K562 (cell line): ENCODE measurements at regions of chr4 and their contacts with region 1.

Region 1: GRCh38 chr4:83074086-83074704 is 39.2 kb downstream of the COPS4 start:
- DNase-seq: peak; percentile 33 to 70 (median 42)
- ATAC-seq: peak; percentile 89
- H3K4me3 ChIP-seq: no peak overlapping the region
- H3K27ac ChIP-seq: no peak overlapping the region
- H3K4me1 ChIP-seq: no peaks in the 10 kb centered on the region
- H3K27me3 ChIP-seq: no peaks in the 10 kb centered on the region
- CTCF ChIP-seq: peak; percentile 53 to 69 (median 53); a peak in 5 of 6 replicates
- EP300 ChIP-seq: no peak
- POLR2A ChIP-seq: no peak
- RAD21 ChIP-seq: peak; percentile 37 to 62

Region 2: DNA sequence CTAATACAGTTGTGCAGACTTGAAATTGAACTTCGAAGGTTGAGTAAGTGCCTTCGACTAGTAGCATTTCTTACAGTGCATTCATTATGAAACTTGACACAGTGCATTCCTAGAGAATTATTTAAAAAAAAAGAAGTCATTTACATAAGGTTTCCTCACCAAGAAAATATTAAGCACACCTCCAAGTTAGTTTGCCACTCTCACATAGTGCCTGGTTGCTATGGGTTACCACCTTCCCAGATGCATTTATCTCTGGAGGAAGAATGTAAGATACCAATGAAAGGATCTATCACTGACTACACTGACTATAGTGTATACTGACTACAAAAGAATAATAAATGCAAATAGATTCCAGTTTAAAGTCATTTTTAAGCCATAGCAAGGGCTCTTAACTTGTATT is 1290.6 kb before region 1 on chr4:
- CTCF ChIA-PET with region 1: no interaction called
- POLR2A ChIA-PET with region 1: no interaction called
- in situ Hi-C with region 1: no loop called
- intact Hi-C with region 1: no loop called
- DNase-seq: no peak
- ATAC-seq: no peak
- H3K4me3 ChIP-seq: no peak overlapping the region
- H3K27ac ChIP-seq: no peak overlapping the region
- H3K4me1 ChIP-seq: peaks cover 12 to 25% of the 10 kb centered on the region in 2 experiments
- H3K27me3 ChIP-seq: no peaks in the 10 kb centered on the region
- CTCF ChIP-seq: no peak
- EP300 ChIP-seq: no peak
- POLR2A ChIP-seq: no peak
- RAD21 ChIP-seq: no peak

Region 3: DNA sequence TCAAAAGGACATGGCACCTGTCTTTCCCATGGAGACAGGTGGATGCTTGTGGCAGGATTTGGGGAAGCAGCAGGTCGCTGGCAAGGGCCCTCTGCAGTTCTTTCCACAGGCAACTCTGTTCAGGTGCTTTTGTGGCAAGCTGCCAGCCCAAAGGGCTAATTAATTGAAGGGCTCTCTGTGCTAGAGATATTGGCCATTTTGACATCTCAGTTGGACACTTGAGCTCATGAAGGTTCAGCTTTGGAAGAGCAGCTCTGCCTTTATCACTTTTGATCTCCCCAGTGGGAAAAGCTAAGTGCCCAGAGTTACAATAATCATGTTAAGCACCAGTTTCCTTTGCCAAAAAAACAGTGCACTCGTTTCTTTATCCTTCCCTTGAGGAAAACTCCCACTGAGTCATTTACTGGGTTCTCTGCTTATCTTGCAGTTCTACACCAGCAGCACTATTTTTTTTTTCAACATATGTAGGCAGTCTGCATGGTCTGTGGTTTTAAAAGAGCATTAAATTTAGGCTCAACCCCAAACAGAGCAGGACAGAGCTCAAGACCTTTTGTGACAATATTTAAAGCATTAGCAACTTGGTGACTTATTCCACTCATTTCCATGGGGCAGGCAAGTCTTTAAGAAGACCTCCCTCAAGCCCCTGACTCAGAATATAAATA is 1266.1 kb before region 1 on chr4:
- CTCF ChIA-PET with region 1: no interaction called
- POLR2A ChIA-PET with region 1: no interaction called
- in situ Hi-C with region 1: no loop called
- intact Hi-C with region 1: no loop called
- DNase-seq: peak in 2 of 4 experiments; percentile 65 to 78
- ATAC-seq: peak; percentile 80
- H3K4me3 ChIP-seq: no peak overlapping the region
- H3K27ac ChIP-seq: peak overlapping the region; percentile 29; the same call in 2 of the 3 replicates
- H3K4me1 ChIP-seq: peaks cover 21 to 41% of the 10 kb centered on the region in 2 experiments
- H3K27me3 ChIP-seq: no peaks in the 10 kb centered on the region
- CTCF ChIP-seq: no peak
- EP300 ChIP-seq: peak; percentile 81; the same call in 1 of the 2 replicates
- POLR2A ChIP-seq: no peak
- RAD21 ChIP-seq: no peak

Region 4: GRCh38 chr4:83252782-83253405 is 178.7 kb after region 1 on chr4:
- CTCF ChIA-PET with region 1: no interaction called
- POLR2A ChIA-PET with region 1: no interaction called
- in situ Hi-C with region 1: no loop called
- intact Hi-C with region 1: loop called (anchors 1 kb)
- DNase-seq: peak; percentile 66 to 80 (median 68)
- ATAC-seq: peak; percentile 94
- H3K4me3 ChIP-seq: no peak overlapping the region
- H3K27ac ChIP-seq: no peak overlapping the region
- H3K4me1 ChIP-seq: no peaks in the 10 kb centered on the region; a peak in 2 of 5 replicates
- H3K27me3 ChIP-seq: no peaks in the 10 kb centered on the region
- CTCF ChIP-seq: peak; percentile 81 to 91 (median 84)
- EP300 ChIP-seq: peak; percentile 9; the same call in 1 of the 2 replicates
- POLR2A ChIP-seq: no peak
- RAD21 ChIP-seq: peak; percentile 79 to 80